Activated CD4-positive, alpha-beta T cell treated with anti-CD3 and anti-CD28 coated beads for 36 hours (primary cell): ENCODE measurements at regions of chrX and their contacts with region 1.

Region 1: GRCh38 chrX:123422877-123423276 is 238.8 kb downstream of the GRIA3 start:
- DNase-seq: no peak
- ATAC-seq: no peak
- H3K4me3 Mint-ChIP-seq: no peak overlapping the region
- H3K27ac Mint-ChIP-seq: no peak overlapping the region
- H3K4me1 Mint-ChIP-seq: no peaks in the 10 kb centered on the region
- H3K27me3 Mint-ChIP-seq: peaks cover 2% of the 10 kb centered on the region

Region 2: DNA sequence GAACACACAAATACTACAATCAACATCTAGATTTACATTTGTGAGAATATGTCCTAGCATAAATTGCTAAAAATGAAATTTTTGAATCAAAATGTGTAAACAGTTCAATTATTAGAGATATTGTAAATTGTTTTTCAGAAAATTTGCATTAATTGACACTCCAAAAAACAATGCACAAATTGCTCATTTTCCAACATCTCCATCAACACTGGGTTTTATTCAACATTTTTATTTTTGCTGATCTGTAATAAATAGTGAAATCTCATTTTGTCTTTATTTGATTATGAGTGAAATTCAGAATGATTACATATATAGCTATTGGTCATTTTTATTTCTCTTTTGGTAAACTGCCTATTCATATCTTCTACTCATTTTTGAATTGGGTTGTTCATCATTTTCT is 358.8 kb before region 1 on chrX:
- CTCF ChIA-PET with region 1: no interaction called
- POLR2A ChIA-PET with region 1: no interaction called
- intact Hi-C with region 1: no loop called
- DNase-seq: no peak
- ATAC-seq: no peak
- H3K4me3 Mint-ChIP-seq: no peak overlapping the region
- H3K27ac Mint-ChIP-seq: no peak overlapping the region
- H3K4me1 Mint-ChIP-seq: no peaks in the 10 kb centered on the region
- H3K27me3 Mint-ChIP-seq: no peaks in the 10 kb centered on the region

Region 3: DNA sequence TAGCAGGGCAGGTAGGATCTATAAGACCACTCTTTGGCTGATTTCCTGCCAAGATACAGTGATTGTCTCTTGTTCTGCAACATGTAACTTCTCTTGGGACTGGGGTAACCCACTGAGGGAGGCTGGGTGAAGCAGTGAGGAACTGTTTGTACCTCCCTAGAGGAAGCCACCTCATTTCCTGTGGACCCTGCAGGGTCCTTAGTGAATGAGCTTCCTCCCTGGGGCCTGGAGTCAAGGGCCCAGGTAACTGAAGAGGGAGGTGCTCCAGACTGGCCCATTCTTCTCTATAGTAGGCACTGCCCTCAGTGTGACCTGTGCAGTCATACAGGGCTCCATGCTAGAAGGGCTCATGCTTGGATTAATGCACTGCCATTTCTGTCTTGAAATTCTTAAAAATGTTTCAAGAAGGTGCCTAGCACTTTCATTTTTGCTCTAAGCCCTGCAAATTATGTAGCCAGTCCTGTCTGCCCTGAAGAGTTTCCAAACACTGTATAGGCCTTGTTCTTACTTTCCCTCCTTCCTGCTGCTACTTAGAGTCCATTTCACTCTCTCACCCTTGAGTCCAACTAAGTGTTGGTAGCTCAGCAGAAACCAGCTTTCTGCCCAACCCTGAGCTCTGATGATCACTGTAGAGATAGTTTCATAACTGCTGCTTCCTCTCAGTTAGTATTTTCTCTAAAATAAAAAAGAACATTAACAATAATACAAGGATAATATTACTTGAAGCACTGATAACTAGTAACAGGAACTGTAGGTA is 247.3 kb before region 1 on chrX:
- CTCF ChIA-PET with region 1: no interaction called
- POLR2A ChIA-PET with region 1: no interaction called
- intact Hi-C with region 1: loop called in 1 of 2 experiments (anchors 5 kb)
- DNase-seq: no peak
- ATAC-seq: no peak
- H3K4me3 Mint-ChIP-seq: no peak overlapping the region
- H3K27ac Mint-ChIP-seq: no peak overlapping the region
- H3K4me1 Mint-ChIP-seq: no peaks in the 10 kb centered on the region
- H3K27me3 Mint-ChIP-seq: no peaks in the 10 kb centered on the region